GM13977 (cell line): ENCODE measurements at regions of chr16 and their contacts with region 1.

Region 1: DNA sequence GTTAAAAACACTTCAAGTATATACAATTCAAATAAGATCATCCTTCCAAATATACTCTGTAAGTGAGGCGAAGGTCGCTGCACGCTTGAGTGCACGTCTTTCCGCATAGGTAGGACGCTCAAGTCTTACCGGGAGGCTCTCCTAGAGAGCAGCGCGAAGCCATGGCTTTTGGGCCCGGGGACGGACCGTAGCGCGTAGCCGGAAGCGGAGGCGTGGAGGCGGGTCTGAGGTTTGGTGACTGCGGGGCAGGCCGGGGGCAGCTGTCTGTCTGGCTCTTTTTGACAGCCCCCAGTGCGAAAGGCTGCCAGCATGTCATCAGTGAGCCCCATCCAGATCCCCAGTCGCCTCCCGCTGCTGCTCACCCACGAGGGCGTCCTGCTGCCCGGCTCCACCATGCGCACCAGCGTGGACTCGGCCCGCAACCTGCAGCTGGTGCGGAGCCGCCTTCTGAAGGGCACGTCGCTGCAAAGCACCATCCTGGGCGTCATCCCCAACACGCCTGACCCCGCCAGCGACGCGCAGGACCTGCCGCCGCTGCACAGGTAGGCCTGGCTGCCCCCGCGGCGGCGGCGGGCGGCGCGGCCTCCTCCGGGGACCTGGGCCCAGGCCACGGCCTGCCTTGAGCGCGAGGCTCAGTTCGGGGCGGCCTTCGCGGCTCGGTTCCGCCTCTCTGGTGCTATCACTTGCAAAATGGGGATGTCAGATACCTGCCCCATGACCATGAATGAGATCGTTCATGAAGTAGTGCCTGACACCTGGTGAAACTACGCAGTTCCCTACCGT is at the start of gene LONP2:
- DNase-seq: peak; percentile 93
- CTCF ChIP-seq: no peak

Region 2: GRCh38 chr16:48194828-48195556 is 49.3 kb before region 1 on chr16:
- in situ Hi-C with region 1: no loop called
- DNase-seq: no peak
- CTCF ChIP-seq: no peak

Region 3: DNA sequence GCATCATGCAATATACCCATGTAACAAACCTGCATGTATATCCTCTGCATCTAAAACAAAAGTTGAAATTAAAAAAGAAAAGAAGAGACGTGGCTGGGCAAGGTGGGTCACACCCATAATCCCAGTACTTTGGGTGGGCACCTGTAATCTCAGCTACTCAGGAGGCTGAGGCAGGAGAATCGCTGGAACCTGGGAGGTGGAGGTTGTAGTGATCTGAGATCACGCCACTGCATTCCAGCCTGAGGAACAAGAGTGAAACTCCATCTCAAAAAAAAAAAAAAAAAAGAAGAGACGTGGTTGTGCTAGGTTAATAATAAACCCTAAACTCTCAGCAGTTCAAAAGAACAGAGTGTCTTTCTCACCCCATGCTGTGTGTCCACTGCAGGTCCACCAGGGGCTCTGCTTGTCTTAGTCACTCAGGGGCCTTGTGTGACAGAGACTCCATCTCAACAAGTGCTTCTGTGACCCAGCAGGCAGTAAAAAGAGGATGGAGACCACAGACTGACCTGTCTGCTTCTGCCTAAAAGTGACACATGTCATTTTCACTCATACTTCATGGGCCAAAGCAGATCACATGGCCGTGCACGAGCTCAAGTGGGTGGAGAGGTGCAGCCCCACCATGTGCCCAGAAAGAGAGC is 388.0 kb after region 1 on chr16:
- in situ Hi-C with region 1: loop called (anchors 25 kb)
- DNase-seq: no peak
- CTCF ChIP-seq: no peak

Region 4: DNA sequence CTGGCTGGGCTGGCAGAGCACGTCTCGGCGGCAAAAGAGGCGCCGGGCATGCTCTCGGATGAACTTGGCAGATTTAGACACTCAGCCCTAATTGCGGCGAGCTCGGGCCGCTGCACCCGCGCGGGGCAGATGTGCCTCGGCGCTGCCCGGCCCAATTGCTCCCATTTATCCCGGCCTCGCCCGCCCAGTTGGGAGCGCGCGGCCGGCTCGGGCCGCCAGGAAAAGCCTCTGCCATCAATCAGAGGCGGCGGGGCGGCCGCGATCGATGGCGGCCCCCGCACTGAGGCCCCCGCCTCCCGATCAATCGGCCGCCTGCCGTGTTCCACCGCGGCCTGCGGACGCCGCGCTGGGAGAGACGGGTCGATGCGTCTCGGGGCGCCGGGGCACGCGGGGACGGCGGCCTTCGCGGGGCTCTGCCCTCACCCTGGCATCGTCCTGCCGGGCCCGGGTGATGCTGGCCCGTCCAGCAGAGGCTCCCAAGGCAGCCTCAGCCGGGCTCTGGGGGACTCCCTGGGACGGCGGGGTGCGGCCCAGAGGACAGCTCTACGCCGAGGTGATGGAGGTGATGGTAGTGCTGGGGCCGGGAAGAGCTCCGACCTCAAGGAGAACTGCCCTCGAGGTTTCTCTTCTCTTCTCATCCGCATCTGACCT is 566.7 kb after region 1 on chr16:
- in situ Hi-C with region 1: no loop called
- DNase-seq: peak; percentile 10
- CTCF ChIP-seq: no peak

Region 5: GRCh38 chr16:49513040-49513439 is 1268.8 kb after region 1 on chr16:
- in situ Hi-C with region 1: no loop called
- DNase-seq: peak; percentile 59
- CTCF ChIP-seq: peak; percentile 10